ENCODE measurements at regions of chr10 and their contacts with region 1.

Region 1: GRCh38 chr10:124741281-124741921 is 2.8 kb downstream of the FAM53B start:
- DNase-seq: peak; percentile 77 to 89
- ATAC-seq: peak; percentile 53 to 72 (median 60)
- H3K4me3 ChIP-seq: peak overlapping the region; percentile 55
- H3K4me3 Mint-ChIP-seq: peak overlapping the region; percentile 99
- H3K27ac ChIP-seq: peak overlapping the region; percentile 68
- H3K27ac Mint-ChIP-seq: peak overlapping the region; percentile 92 to 93
- H3K4me1 ChIP-seq: peaks cover 61% of the 10 kb centered on the region
- H3K4me1 Mint-ChIP-seq: peaks cover 70 to 82% of the 10 kb centered on the region in 2 donors
- H3K27me3 ChIP-seq: no peaks in the 10 kb centered on the region
- H3K27me3 Mint-ChIP-seq: no peaks in the 10 kb centered on the region
- CTCF ChIP-seq: peak; percentile 99

Region 2: GRCh38 chr10:124539935-124540641 is 201.3 kb before region 1 on chr10:
- intact Hi-C with region 1: loop called (anchors 1 kb)
- DNase-seq: peak; percentile 69 to 82
- ATAC-seq: peak; percentile 75 to 96 (median 93)
- H3K4me3 ChIP-seq: no peak overlapping the region
- H3K4me3 Mint-ChIP-seq: no peak overlapping the region
- H3K27ac ChIP-seq: peak overlapping the region; percentile 50
- H3K27ac Mint-ChIP-seq: no peak overlapping the region
- H3K4me1 ChIP-seq: peaks cover 32% of the 10 kb centered on the region
- H3K4me1 Mint-ChIP-seq: peaks cover 1 to 2% of the 10 kb centered on the region in 2 donors
- H3K27me3 ChIP-seq: no peaks in the 10 kb centered on the region
- H3K27me3 Mint-ChIP-seq: no peaks in the 10 kb centered on the region
- CTCF ChIP-seq: peak; percentile 77

Region 3: GRCh38 chr10:124641282-124642087 is 99.9 kb before region 1 on chr10:
- intact Hi-C with region 1: loop called (anchors 2 kb)
- DNase-seq: peak; percentile 54 to 77
- ATAC-seq: peak; percentile 64 to 84 (median 75)
- H3K4me3 ChIP-seq: no peak overlapping the region
- H3K4me3 Mint-ChIP-seq: peak overlapping the region; percentile 77
- H3K27ac ChIP-seq: peak overlapping the region; percentile 92
- H3K27ac Mint-ChIP-seq: peak overlapping the region; percentile 96 to 99
- H3K4me1 ChIP-seq: peaks cover 98% of the 10 kb centered on the region
- H3K4me1 Mint-ChIP-seq: peaks cover 53 to 91% of the 10 kb centered on the region in 2 donors
- H3K27me3 ChIP-seq: no peaks in the 10 kb centered on the region
- H3K27me3 Mint-ChIP-seq: no peaks in the 10 kb centered on the region
- CTCF ChIP-seq: no peak

Region 4: DNA sequence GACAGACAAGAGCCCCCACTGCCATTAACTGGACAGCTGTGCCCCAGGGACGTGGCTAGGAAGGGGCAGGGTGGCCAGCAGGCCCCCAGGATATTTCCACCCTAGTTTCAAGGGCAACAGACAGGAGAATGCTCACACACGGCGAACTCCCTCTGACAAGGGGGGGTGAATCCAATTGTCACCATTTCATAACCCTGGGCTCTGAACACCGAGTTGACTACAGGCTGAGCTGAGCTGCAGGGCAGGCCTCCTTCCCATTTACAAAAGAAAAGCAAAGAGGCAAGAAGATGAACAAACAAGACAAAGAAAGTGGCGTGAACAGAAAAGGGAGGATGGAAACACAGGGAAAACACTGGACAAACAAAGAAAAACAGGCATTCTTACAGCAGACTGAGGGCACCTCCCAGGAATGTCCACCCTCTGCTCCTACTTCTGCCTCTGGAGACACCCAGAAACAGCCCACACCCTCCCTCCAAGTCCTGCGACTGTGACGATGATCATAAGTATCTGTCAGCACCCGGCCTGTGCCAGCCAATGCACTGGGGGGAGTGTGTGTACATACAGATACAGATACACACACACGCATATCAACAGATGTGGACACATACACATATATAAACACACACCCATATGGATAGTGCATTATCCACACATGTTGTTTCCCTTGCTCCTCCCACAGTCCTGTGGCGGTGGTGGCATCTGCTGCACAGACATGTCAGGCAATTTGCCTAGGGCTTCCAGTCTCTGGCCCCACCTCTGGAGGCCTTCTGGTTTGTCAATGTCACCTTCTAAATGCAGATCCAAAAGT is 63.4 kb before region 1 on chr10:
- intact Hi-C with region 1: loop called (anchors 2 kb)
- DNase-seq: peak in 1 of 2 donors; percentile 38
- ATAC-seq: peak; percentile 12 to 25 (median 18)
- H3K4me3 ChIP-seq: no peak overlapping the region
- H3K4me3 Mint-ChIP-seq: peak overlapping the region; percentile 87
- H3K27ac ChIP-seq: peak overlapping the region; percentile 63
- H3K27ac Mint-ChIP-seq: peak overlapping the region; percentile 93 to 96
- H3K4me1 ChIP-seq: peaks cover 96% of the 10 kb centered on the region
- H3K4me1 Mint-ChIP-seq: peaks cover 72 to 90% of the 10 kb centered on the region in 2 donors
- H3K27me3 ChIP-seq: no peaks in the 10 kb centered on the region
- H3K27me3 Mint-ChIP-seq: no peaks in the 10 kb centered on the region
- CTCF ChIP-seq: no peak

Region 5: DNA sequence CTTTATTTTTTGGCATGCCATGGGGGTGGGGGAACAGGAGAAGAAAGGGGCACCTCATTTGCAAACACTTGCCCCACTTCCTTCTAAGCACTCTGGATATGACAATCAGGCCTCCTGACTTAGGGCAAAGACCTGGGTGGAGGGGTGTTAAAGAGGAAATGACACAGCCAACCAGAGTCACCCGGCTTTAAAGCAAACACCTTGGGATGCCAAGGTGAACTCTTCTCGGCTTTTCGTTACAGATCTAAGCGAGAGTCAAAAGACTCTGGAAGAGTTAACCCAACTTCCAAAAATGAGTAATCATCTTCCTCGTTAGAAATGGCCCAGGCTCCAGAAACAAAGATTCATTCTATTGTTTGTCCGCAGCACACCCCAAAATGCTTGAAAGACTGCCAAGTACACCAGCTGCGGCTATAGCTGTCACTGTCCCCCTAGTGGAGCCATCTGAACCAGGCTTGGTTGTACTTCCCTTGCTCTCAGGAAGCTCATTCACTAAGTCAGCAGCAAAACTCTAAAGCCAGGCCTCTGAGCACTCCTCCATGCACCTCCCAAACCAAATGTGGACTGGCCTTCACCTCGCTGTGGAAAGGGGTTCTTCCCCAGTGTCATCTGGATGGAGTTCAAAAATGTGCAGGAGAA is 22.1 kb before region 1 on chr10:
- intact Hi-C with region 1: loop called (anchors 1 kb)
- DNase-seq: peak; percentile 56 to 91
- ATAC-seq: peak; percentile 34 to 60 (median 41)
- H3K4me3 ChIP-seq: no peak overlapping the region
- H3K4me3 Mint-ChIP-seq: peak overlapping the region; percentile 65
- H3K27ac ChIP-seq: peak overlapping the region; percentile 91
- H3K27ac Mint-ChIP-seq: peak overlapping the region; percentile 99
- H3K4me1 ChIP-seq: peaks cover 91% of the 10 kb centered on the region
- H3K4me1 Mint-ChIP-seq: peaks cover 92 to 97% of the 10 kb centered on the region in 2 donors
- H3K27me3 ChIP-seq: no peaks in the 10 kb centered on the region
- H3K27me3 Mint-ChIP-seq: no peaks in the 10 kb centered on the region
- CTCF ChIP-seq: peak; percentile 62

Measured in natural killer cell (primary cell).